ENCODE measurements at regions of chr5 and their contacts with region 1.

Region 1: DNA sequence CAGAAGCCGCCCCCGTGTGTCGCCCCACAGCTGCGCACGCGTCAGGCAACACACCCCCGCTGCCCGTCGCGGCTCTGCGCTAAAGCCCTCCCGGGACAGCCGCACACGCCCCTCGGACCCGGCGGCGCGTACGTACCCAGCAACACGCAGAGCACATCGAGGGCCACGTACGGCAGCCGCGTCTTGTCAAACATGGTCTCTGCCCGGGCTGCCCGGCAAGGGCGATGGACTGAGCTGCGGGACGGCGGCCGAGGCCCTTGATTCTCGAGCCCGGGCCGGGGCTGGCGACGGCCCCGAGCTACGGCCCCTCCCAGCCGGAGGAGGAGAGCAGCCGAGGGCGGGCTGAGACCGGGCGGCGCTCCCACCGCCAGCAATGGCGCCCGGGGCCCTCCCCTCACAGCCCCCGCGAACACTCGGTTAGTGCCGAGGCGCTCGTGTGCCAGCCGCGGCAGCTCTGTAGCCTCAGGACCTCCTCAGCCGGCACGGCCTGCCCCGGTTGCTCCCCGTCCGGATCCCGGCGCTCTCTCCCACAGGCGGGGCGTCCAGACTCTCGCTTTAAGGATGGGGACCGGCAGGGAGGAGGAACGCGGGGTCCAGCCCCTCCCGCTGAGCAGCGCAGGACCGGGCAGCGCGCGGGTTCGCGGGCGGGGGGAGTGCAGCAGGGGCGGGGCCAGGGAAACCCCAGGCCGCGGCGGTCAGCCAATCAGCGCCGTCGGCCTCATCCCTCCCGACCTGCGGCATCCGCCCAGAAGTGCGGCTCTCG is at the start of gene PLPP1:
- DNase-seq: peak; percentile 89
- ATAC-seq: peak; percentile 79
- H3K4me3 Mint-ChIP-seq: peak within 1 kb of the TSS; percentile 90
- H3K27ac Mint-ChIP-seq: peak within 1 kb of the TSS; percentile 87
- H3K4me1 Mint-ChIP-seq: peaks cover 25% of the 10 kb centered on the region
- H3K27me3 Mint-ChIP-seq: no peaks in the 10 kb centered on the region
- CTCF ChIP-seq: no peak
- total RNA-seq, gene PLPP1: 10.3 and 12.0 TPM in 2 replicates

Region 2: GRCh38 chr5:55307383-55308253 is 227.0 kb before region 1 on chr5 and contains the starts of genes DHX29 and MTREX:
- CTCF ChIA-PET with region 1: no interaction called
- POLR2A ChIA-PET with region 1: interaction called, 7 read pairs
- intact Hi-C with region 1: loop called (anchors 2 kb)
- DNase-seq: peak; percentile 82
- ATAC-seq: peak; percentile 92
- H3K4me3 Mint-ChIP-seq: no peak within 1 kb of the TSS
- H3K27ac Mint-ChIP-seq: no peak within 1 kb of the TSS
- H3K4me1 Mint-ChIP-seq: peaks cover 31% of the 10 kb centered on the region
- H3K27me3 Mint-ChIP-seq: no peaks in the 10 kb centered on the region
- CTCF ChIP-seq: no peak
- total RNA-seq, gene DHX29: 17.4 TPM in 2 replicates
- total RNA-seq, gene MTREX: 98.8 and 106 TPM in 2 replicates

Region 3: GRCh38 chr5:55421074-55421529 is 113.5 kb before region 1 on chr5:
- CTCF ChIA-PET with region 1: no interaction called
- POLR2A ChIA-PET with region 1: no interaction called
- intact Hi-C with region 1: loop called (anchors 5 kb)
- DNase-seq: no peak
- ATAC-seq: peak; percentile 69
- H3K4me3 Mint-ChIP-seq: no peak overlapping the region
- H3K27ac Mint-ChIP-seq: peak overlapping the region; percentile 2
- H3K4me1 Mint-ChIP-seq: peaks cover 14% of the 10 kb centered on the region
- H3K27me3 Mint-ChIP-seq: no peaks in the 10 kb centered on the region
- CTCF ChIP-seq: no peak

Region 4: DNA sequence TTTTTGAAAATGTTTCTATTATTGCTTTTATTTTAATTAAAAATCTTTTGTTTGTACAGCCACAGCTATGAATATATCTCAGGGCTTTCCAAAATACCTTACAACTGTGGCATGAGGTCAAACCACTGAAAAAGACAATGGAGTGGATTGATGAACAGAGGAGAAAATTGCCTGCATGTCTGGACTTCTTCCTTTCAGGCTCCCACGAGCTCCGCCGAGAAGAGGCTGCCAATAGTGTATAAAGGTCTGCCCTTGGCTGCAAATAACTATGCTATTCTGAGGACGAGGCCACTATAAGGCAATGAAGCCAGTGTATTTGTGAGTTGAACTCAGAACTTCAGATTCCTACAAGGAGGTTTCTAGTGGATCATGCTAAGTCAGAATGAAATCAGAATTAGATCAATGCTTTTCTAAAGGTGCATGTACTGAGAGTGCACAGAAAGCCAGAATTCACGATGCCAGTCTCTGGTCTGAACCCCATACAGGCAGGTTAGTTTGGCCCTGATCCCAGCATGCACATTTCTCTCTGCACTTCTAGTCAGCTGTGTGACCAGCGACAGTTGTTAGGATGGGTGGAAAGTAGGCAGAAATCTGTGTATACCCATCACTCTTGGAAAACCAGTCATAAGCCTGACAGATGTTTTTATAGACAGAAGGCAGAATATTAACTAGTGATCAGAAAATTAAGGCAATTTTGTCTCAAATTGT is 42.9 kb after region 1 on chr5:
- CTCF ChIA-PET with region 1: no interaction called
- POLR2A ChIA-PET with region 1: no interaction called
- intact Hi-C with region 1: no loop called
- DNase-seq: no peak
- ATAC-seq: no peak
- H3K4me3 Mint-ChIP-seq: no peak overlapping the region
- H3K27ac Mint-ChIP-seq: no peak overlapping the region
- H3K4me1 Mint-ChIP-seq: peaks cover 5% of the 10 kb centered on the region
- H3K27me3 Mint-ChIP-seq: no peaks in the 10 kb centered on the region
- CTCF ChIP-seq: no peak

Region 5: GRCh38 chr5:55903121-55903701 is 368.6 kb after region 1 on chr5:
- CTCF ChIA-PET with region 1: no interaction called
- POLR2A ChIA-PET with region 1: no interaction called
- intact Hi-C with region 1: loop called (anchors 5 kb)
- DNase-seq: peak; percentile 62
- ATAC-seq: peak; percentile 96
- H3K4me3 Mint-ChIP-seq: peak overlapping the region; percentile 56
- H3K27ac Mint-ChIP-seq: peak overlapping the region; percentile 56
- H3K4me1 Mint-ChIP-seq: peaks cover 17% of the 10 kb centered on the region
- H3K27me3 Mint-ChIP-seq: peaks cover 8% of the 10 kb centered on the region
- CTCF ChIP-seq: no peak